ENCODE measurements at regions of chr1 and their contacts with region 1.

Region 1: GRCh38 chr1:246012341-246012740 is 494.7 kb downstream of the SMYD3 start:
- H3K4me3 Mint-ChIP-seq: no peak overlapping the region
- H3K27ac Mint-ChIP-seq: no peak overlapping the region
- H3K4me1 Mint-ChIP-seq: peaks cover 4% of the 10 kb centered on the region
- H3K27me3 Mint-ChIP-seq: no peaks in the 10 kb centered on the region

Region 2: DNA sequence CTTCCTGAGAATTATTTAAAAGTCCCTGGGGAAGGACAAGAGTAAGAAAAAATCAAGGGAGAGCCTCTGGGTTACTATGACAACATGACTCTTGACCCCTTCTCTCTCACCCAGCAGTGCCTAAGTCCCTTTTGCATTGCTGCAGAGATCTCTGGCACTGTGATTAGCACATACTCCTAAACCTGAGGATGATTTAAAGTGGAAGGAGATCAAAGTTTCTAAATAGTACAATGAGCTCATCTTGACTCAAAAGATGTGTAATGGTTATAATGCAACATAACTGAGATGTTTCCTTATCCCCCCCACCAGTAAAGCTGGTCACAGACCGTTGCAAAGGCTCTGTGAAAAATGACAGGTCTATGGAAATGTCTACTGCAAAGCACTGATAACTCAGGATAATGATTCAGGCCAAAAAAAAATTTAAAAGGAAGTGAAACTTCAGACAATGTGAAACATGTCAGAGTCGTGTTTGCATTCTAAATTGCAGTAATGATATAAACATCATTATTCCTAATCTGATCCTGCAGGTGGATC is 338.4 kb before region 1 on chr1:
- intact Hi-C with region 1: no loop called
- H3K4me3 Mint-ChIP-seq: no peak overlapping the region
- H3K27ac Mint-ChIP-seq: no peak overlapping the region
- H3K4me1 Mint-ChIP-seq: peaks cover 9% of the 10 kb centered on the region
- H3K27me3 Mint-ChIP-seq: no peaks in the 10 kb centered on the region

Region 3: DNA sequence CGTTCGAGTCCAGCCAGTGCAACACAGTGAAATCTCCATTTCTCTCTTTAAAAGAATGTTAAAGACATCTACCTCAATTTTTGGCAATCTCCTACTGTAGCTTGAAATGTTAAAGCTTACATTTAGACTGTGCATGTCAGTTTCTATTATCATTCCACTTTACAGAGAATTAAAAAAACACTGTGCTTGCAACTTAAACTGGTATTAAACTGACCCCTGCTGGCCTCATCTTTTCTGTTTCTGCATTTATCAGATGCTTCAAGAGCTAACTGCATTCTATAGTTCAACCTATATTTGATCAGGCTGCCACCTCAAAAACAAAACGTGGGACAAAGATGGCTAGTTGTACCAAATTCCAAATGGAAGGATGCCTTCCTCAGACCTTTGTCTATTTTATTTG is 268.2 kb after region 1 on chr1:
- intact Hi-C with region 1: loop called (anchors 1 kb)
- H3K4me3 Mint-ChIP-seq: no peak overlapping the region
- H3K27ac Mint-ChIP-seq: no peak overlapping the region
- H3K4me1 Mint-ChIP-seq: peaks cover 8% of the 10 kb centered on the region
- H3K27me3 Mint-ChIP-seq: no peaks in the 10 kb centered on the region

Region 4: GRCh38 chr1:246450611-246451251 is 438.4 kb after region 1 on chr1:
- intact Hi-C with region 1: loop called (anchors 1 kb)
- H3K4me3 Mint-ChIP-seq: no peak overlapping the region
- H3K27ac Mint-ChIP-seq: no peak overlapping the region
- H3K4me1 Mint-ChIP-seq: peaks cover 6% of the 10 kb centered on the region
- H3K27me3 Mint-ChIP-seq: no peaks in the 10 kb centered on the region

Region 5: GRCh38 chr1:246497331-246497915 is 485.1 kb after region 1 on chr1:
- intact Hi-C with region 1: loop called (anchors 1 kb)
- H3K4me3 Mint-ChIP-seq: no peak overlapping the region
- H3K27ac Mint-ChIP-seq: no peak overlapping the region
- H3K4me1 Mint-ChIP-seq: peaks cover 11% of the 10 kb centered on the region
- H3K27me3 Mint-ChIP-seq: no peaks in the 10 kb centered on the region

Region 6: GRCh38 chr1:246508897-246509688 is 496.8 kb after region 1 on chr1:
- intact Hi-C with region 1: no loop called
- H3K4me3 Mint-ChIP-seq: no peak overlapping the region
- H3K27ac Mint-ChIP-seq: no peak overlapping the region
- H3K4me1 Mint-ChIP-seq: peaks cover 19% of the 10 kb centered on the region
- H3K27me3 Mint-ChIP-seq: peaks cover 9% of the 10 kb centered on the region

Measured in dendritic cell treated with granulocyte-macrophage colony-stimulating factor and Interleukin-4, amounts not matched to agents 40 ng/mL and 50 ng/mL, for 4 days (primary cell).